MCF 10A (cell line): ENCODE measurements at regions of chr20 and their contacts with region 1.

Region 1: GRCh38 chr20:62921119-62921687 is 5.1 kb downstream of the DIDO1 start:
- DNase-seq: peak; percentile 79
- H3K4me3 Mint-ChIP-seq: peak overlapping the region; percentile 35
- H3K27ac Mint-ChIP-seq: no peak overlapping the region
- H3K4me1 Mint-ChIP-seq: peaks cover 54% of the 10 kb centered on the region
- H3K27me3 Mint-ChIP-seq: no peaks in the 10 kb centered on the region
- CTCF ChIP-seq: peak; percentile 44

Region 2: GRCh38 chr20:62907384-62908317 is 13.6 kb before region 1 on chr20:
- CTCF ChIA-PET with region 1: interaction called, 25 read pairs
- POLR2A ChIA-PET with region 1: interaction called, 36 read pairs
- intact Hi-C with region 1: no loop called
- DNase-seq: no peak
- H3K4me3 Mint-ChIP-seq: no peak overlapping the region
- H3K27ac Mint-ChIP-seq: no peak overlapping the region
- H3K4me1 Mint-ChIP-seq: no peaks in the 10 kb centered on the region
- H3K27me3 Mint-ChIP-seq: no peaks in the 10 kb centered on the region
- CTCF ChIP-seq: peak; percentile 64

Region 3: DNA sequence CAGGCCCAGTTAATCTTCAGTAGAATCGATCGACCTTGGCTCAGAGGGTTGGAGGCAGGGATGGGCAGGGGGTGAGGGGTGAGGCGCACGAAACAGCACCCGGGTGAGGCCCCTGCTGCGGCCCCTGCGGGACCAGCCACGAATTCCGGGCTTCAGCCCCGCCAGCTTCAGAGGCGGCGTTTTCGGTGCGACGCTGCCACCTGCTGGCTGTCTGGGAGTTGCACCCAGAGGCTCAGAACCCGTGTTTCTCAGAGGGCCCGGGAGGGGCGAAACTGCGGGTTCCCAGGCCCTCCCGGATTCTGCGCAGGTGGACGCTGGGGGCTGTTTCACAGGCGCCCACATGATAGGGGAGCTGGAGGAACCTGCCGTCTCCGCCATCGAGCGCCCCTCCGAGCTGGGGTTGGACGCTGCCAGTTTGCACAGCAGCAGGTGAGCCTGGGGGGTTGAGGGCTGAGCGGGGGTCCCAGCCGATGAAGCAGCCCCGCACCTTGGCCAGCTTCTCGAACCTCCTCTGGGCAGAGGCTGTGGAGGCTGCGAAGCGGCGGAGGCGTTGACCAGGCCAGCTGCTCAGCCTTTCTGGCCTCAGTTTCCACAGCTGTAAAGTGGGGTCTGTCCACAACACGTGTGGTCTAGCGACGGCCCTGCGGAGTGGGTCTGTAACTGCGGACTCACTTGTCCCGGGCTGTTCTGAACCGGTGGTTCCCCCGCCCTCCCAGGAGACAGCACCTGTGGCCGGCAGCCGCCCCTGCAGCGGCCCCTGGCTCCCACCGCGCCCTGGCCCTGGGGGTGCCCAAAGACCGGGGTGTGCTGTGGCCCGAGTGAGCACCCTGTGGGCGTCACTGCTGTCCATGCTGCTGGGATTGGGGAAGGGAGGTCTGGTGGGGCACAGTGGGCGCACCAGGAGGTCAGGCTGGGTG is 88.1 kb after region 1 on chr20:
- CTCF ChIA-PET with region 1: no interaction called
- POLR2A ChIA-PET with region 1: no interaction called
- intact Hi-C with region 1: no loop called
- DNase-seq: peak; percentile 66
- H3K4me3 Mint-ChIP-seq: no peak overlapping the region
- H3K27ac Mint-ChIP-seq: no peak overlapping the region
- H3K4me1 Mint-ChIP-seq: peaks cover 6% of the 10 kb centered on the region
- H3K27me3 Mint-ChIP-seq: peaks cover 58% of the 10 kb centered on the region
- CTCF ChIP-seq: peak; percentile 89